ENCODE measurements at regions of chr17 and their contacts with region 1.

Region 1: DNA sequence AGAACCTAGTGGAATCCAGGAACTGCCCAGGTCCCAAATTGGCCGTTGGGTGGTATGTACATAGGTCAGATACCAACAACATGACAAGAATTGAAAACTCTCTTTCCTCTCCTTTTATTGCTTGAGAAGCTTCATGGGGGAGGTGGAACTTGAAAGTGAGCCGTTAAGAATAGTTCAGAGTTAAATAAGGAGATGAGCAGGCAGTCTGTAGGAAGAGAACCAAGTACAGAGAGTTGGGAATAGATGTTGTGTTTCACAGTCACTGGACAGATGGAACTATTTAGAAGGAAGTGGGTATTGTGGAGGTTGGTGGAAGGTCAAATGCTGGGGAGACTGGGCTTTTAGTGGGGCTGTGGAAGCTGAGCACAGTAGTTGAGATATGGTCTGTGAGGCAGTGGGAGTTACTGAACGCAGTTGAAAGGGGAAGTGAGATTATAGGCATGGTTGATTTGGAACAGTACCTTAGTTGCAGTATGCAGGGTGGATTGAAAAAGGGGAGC is 26.4 kb downstream of the ARHGAP44 start:
- DNase-seq: no peak
- ATAC-seq: no peak
- H3K4me3 Mint-ChIP-seq: no peak overlapping the region
- H3K27ac Mint-ChIP-seq: no peak overlapping the region
- H3K4me1 Mint-ChIP-seq: no peaks in the 10 kb centered on the region
- H3K27me3 Mint-ChIP-seq: peaks cover 3% of the 10 kb centered on the region
- CTCF ChIP-seq: no peak

Region 2: GRCh38 chr17:12877953-12878669 is 62.4 kb after region 1 on chr17:
- CTCF ChIA-PET with region 1: no interaction called
- POLR2A ChIA-PET with region 1: no interaction called
- intact Hi-C with region 1: loop called (anchors 10 kb)
- DNase-seq: no peak
- ATAC-seq: no peak
- H3K4me3 Mint-ChIP-seq: no peak overlapping the region
- H3K27ac Mint-ChIP-seq: no peak overlapping the region
- H3K4me1 Mint-ChIP-seq: no peaks in the 10 kb centered on the region
- H3K27me3 Mint-ChIP-seq: no peaks in the 10 kb centered on the region
- CTCF ChIP-seq: no peak